BJ (cell line): ENCODE measurements at regions of chr4 and their contacts with region 1.

Region 1: DNA sequence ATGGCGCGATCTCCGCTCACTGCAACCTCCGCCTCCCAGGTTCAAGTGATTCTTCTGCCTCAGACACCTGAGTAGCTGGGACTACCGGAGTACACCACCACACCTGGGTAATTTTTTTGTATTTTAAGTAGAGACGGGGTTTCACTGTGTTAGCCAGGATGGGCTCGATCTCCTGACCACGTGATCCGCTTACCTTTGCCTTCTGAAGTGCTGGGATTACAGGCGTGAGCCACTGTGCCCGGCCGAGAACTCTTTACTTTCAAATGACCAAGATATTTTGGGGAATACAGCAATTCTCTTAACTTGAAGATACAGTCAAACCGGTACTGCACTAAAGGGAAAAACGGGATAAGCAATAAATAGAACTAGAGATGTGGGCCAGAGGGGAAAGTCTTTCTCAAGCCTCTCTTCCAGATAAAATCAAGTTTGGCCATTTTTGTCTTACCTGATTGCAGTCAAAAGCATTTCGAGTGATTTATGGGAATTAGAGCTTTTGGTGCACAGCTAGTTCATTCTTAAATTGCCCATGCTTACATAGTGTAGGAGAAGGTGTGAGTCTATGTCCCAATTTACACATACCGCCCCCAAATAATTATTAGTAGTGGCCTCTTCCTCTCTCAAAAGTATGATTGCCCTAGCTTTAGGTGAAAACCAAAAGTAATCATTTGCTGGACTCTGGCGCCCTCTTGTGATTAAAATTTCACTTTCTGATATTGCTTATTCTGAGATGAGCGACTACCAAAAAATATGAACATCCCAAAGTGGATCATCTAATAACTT is 53.2 kb upstream of the ABCG2 start:
- DNase-seq: no peak
- H3K4me3 ChIP-seq: no peak overlapping the region
- H3K27me3 ChIP-seq: peaks cover 4% of the 10 kb centered on the region
- CTCF ChIP-seq: peak; percentile 56

Region 2: DNA sequence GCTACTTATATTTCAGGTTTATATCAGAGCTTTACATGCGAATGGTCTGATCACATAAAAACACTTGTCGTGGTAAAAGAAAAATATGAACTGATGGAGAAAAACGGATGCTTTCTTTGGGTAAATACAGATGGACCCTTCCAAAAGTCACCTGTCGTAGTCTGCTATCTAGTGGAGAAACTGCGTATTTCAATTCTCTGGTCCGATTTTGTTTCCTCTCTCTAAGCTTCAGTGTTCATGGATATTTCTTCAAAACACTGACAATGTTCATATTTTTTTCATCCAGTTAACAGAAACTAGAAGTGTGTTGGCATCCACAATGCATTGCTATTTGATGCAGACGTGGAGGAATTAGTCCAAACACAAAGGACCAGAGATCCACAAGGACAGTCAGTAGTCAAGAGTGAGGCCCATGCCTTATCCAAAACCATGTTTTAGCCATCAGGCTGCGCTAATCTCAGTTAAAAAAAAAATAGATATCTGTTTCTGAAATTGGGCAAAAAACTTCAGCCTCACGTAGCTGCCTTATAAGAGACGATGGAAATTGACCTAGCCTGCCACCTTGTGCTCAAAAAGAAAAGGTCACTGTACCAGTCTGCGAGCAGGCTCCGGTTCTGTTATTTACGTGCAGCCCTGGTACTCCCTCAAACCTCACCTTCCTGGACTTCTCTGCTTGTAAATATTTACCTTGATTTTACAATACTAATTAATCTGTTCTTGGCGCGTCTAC is 362.9 kb before region 1 on chr4:
- CTCF ChIA-PET with region 1: interaction called, 53 read pairs
- POLR2A ChIA-PET with region 1: no interaction called
- DNase-seq: no peak
- H3K4me3 ChIP-seq: no peak overlapping the region
- H3K27me3 ChIP-seq: no peaks in the 10 kb centered on the region
- CTCF ChIP-seq: peak; percentile 70

Region 3: DNA sequence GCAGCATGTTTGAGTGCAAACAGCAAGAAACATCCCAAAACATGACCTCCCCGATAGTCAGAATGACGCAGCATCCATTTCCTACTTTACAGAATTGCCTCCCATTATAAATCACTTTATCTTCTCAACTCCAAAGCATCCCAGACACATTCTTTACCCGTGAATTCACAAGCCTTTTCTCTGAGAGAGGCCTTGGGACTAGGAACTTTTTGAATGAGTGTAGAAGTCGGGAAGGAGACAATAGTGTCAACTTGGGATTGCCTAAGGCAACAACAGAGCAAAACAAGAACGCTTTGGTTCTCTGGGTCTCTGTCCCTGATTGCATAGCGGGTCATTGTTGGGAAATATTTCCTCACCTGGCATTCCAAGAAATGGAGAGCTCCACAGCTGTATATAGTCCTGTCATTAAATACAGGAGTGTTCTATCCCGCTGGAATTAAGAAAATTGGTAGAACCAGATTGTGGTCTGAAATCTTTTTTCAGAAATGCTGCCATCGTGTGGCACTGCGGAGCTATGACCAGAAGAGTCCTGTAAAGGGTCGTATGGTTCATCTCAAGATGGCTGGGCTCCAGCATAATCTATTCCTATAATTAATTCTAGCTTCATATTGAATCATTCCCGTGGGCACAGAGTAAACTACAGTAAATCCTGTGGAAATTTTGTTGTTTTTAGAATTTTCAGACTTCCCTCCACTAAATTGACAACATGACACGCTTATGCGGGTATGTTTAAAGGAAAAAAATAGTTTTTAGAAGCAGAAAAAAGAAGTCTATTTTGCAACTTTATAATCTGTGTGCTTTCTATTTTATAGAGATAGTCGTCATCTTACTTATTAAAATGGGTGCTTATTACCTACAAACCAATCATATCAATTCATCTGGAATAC is 238.1 kb before region 1 on chr4:
- CTCF ChIA-PET with region 1: interaction called, 12 read pairs
- POLR2A ChIA-PET with region 1: no interaction called
- DNase-seq: peak; percentile 84
- H3K4me3 ChIP-seq: peak overlapping the region; percentile 17; the same call in 1 of the 2 replicates
- H3K27me3 ChIP-seq: no peaks in the 10 kb centered on the region
- CTCF ChIP-seq: peak; percentile 83

Region 4: GRCh38 chr4:88033309-88033708 is 178.4 kb before region 1 on chr4:
- CTCF ChIA-PET with region 1: interaction called, 56 read pairs
- POLR2A ChIA-PET with region 1: no interaction called
- DNase-seq: no peak
- H3K4me3 ChIP-seq: no peak overlapping the region
- H3K27me3 ChIP-seq: no peaks in the 10 kb centered on the region
- CTCF ChIP-seq: peak; percentile 66

Region 5: DNA sequence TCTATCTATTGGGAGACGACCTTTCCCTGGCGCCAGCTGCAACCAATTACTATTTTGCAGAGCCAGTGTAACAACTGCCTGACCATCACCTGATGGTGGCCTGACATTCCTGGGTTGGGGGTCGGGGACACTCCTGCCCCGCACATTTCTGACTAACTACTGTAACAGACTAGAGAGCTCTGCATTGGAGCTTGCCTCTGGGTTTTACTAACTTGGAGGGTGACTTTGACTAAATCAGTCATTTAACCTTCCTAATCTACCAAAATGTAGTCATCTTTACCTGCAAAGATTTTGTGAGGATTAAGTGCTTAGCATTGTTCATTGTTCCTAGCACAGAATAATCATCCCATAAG is 15.7 kb before region 1 on chr4:
- CTCF ChIA-PET with region 1: interaction called, 13 read pairs
- POLR2A ChIA-PET with region 1: no interaction called
- DNase-seq: no peak
- H3K4me3 ChIP-seq: no peak overlapping the region
- H3K27me3 ChIP-seq: no peaks in the 10 kb centered on the region
- CTCF ChIP-seq: no peak

Region 6: DNA sequence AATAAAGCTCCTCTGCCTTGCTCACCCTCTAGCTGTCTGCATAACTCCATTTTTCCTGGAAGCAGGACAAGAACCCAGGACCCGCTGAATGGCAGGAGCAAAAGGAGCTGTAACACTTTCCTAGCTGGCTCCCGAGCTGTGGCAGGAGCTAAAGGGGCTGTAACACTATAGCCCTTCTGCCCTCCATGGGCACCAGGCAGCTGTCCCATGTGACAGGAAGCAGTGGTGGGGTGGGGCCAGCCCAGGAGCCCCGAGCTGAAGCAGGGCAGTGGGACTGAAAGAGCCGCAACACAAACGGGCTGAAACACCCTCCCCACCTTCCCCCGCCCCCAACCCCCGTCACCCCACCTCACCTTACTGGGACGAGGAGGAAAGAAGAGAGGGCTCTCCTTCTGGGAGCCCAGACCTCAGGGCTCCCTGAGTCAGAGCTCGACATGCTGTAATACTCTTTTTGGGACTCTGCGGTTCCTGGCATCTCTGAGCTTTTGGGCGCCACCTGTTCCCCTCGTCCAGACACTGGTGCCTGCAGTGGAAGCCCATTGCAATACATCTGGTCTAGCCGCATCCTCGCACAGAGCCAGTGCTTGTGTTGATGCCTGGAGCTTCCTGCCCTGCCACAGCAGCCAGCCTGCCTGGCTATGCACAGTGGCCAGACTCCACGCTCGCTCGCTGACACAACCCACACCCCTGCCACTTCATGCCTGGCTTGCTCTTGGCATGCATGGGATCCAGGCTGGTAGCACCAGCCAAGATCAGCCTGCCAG is 33.3 kb after region 1 on chr4:
- CTCF ChIA-PET with region 1: no interaction called
- POLR2A ChIA-PET with region 1: no interaction called
- DNase-seq: no peak
- H3K4me3 ChIP-seq: no peak overlapping the region
- H3K27me3 ChIP-seq: no peaks in the 10 kb centered on the region
- CTCF ChIP-seq: no peak

Region 7: DNA sequence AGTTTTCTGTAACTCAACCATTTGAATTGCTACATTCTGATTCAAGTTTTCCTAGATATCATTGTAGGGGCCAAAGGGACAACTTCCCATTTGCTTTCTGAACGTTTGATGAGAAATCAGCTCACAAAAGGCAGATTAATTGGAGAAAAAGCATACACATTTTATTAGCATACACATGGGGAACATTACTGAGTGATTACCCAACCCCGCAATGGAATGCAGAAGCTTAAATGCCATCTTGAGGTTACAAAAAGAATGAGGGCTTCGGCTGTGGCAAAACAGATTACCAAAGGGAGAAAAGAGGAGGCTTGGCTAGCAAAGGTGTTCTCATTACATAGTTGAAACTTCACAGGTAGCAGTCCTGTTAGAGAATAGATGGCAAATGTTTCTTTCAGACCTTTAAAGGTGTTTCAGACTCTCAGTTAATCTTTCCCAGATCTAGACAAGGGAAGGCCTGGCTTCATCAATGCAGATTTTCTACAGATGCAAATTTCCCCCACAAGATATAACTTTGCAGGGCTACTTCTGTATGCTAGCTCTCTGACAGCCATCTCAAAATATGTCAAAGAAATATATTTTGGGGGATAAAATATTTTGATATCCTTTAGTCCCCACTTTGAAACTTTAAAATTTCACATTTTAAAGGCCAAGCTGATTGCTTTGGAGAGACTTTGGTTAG is 140.5 kb after region 1 on chr4:
- CTCF ChIA-PET with region 1: no interaction called
- POLR2A ChIA-PET with region 1: no interaction called
- DNase-seq: peak; percentile 60
- H3K4me3 ChIP-seq: no peak overlapping the region
- H3K27me3 ChIP-seq: no peaks in the 10 kb centered on the region
- CTCF ChIP-seq: no peak